ENCODE measurements at regions of chr6 and their contacts with region 1.

Region 1: DNA sequence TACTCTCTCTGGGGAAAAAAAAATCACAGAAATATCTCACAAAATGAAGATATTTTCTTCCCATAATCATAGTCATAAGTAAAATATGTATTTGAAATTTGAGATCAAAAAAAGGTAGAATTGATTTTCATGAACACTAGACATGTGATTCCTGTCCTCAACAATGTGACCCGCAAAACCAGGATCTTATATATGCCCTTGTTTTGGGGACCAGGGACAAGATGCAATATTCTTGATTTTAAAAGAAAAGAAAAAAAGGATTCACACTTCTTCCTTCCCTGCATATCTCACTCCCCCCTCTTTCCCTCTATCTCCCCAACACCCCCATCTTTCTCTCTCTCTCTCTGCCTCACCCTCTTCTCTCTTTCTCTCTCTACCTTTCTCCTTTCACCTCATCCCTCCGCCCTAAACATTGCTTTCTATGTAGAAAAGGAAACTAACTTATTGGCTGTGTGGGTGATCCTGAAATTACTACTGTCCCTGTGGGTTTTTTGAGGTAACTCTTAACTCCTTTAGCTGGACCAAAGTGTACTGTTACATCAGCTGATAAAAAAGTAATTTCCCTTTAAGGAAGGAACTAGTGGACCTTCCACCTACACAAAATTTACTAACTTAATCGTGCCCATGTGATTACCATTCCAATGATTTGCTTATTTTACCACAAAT is 85.6 kb downstream of the AIG1 start:
- DNase-seq: no peak
- H3K4me3 ChIP-seq: no peak overlapping the region
- H3K27ac ChIP-seq: no peak overlapping the region
- H3K4me1 ChIP-seq: no peaks in the 10 kb centered on the region
- H3K27me3 ChIP-seq: no peaks in the 10 kb centered on the region
- CTCF ChIP-seq: no peak
- POLR2A ChIP-seq: no peak

Region 2: GRCh38 chr6:141467881-141468280 is 1678.4 kb before region 1 on chr6:
- intact Hi-C with region 1: loop called (anchors 5 kb)
- DNase-seq: no peak
- H3K4me3 ChIP-seq: no peak overlapping the region
- H3K27ac ChIP-seq: no peak overlapping the region
- H3K4me1 ChIP-seq: no peaks in the 10 kb centered on the region
- H3K27me3 ChIP-seq: no peaks in the 10 kb centered on the region
- CTCF ChIP-seq: no peak
- POLR2A ChIP-seq: no peak

Region 3: DNA sequence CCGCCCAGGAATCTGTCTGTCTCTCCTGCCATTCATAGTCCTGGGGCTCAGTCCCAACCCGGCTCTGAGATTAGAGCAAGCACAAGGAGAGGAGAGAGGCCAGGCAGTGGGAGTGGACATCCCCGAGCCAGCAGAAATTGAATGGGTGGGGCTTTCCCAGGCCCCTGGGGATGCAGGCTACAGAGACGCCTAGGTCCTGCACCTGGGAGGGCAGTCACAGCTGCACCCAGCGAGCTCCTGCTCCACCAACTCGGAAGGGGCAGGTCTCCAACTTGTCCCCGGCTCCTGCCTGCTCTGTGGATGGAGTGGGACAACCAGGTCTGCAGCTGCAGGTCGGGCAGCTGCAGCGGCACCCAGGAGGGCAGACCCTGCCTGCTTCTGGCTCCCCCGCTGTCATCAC is 96.7 kb before region 1 on chr6:
- intact Hi-C with region 1: no loop called
- DNase-seq: no peak
- H3K4me3 ChIP-seq: no peak overlapping the region
- H3K27ac ChIP-seq: no peak overlapping the region
- H3K4me1 ChIP-seq: no peaks in the 10 kb centered on the region
- H3K27me3 ChIP-seq: no peaks in the 10 kb centered on the region
- CTCF ChIP-seq: no peak
- POLR2A ChIP-seq: no peak

Region 4: GRCh38 chr6:143196525-143197215 is 50.4 kb after region 1 on chr6:
- intact Hi-C with region 1: no loop called
- DNase-seq: no peak
- H3K4me3 ChIP-seq: no peak overlapping the region
- H3K27ac ChIP-seq: no peak overlapping the region
- H3K4me1 ChIP-seq: no peaks in the 10 kb centered on the region
- H3K27me3 ChIP-seq: no peaks in the 10 kb centered on the region
- CTCF ChIP-seq: no peak
- POLR2A ChIP-seq: no peak